Activated naive CD4-positive, alpha-beta T cell treated with anti-CD3 and anti-CD28 coated beads for 36 hours (primary cell): ENCODE measurements at regions of chr2 and their contacts with region 1.

Region 1: DNA sequence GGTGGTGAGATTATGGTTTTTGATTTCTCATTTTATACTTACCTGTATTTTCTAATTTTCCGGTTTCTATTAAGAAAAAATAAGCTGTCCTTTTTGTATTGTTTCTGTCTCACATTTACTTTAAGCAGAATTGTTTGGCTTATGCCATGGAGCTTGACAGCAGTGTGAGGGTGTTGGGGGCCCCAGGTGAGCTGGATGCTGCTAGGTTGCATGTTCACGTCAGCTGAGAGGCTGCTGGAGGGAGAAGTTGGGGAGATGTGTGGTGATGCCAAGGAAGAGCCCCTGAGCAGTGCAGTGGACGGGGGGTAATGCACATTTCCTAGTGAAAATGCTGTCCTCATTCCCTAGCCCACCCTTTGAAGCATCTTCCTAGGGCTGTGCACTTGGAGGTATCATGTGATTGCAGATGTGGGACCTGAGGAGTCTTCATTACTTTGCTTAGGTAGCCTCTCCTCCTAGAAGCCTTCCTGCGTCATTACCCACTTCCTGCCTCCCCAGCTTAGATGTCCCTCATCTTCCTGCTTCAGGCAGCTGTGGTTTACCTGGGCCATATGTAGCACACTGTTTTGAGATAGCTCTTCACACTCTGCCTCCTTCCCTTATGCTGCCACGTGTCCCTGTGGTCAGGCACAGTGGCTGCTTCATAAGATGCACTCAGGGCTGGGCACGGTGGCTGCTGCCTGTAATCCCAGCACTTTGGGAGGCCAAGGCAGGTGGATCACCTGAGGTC is 16.2 kb downstream of the ATG16L1 start:
- DNase-seq: peak; percentile 88
- H3K4me3 Mint-ChIP-seq: peak overlapping the region; percentile 64
- H3K27ac Mint-ChIP-seq: peak overlapping the region; percentile 95
- H3K4me1 Mint-ChIP-seq: peaks cover 55% of the 10 kb centered on the region
- H3K27me3 Mint-ChIP-seq: no peaks in the 10 kb centered on the region

Region 2: DNA sequence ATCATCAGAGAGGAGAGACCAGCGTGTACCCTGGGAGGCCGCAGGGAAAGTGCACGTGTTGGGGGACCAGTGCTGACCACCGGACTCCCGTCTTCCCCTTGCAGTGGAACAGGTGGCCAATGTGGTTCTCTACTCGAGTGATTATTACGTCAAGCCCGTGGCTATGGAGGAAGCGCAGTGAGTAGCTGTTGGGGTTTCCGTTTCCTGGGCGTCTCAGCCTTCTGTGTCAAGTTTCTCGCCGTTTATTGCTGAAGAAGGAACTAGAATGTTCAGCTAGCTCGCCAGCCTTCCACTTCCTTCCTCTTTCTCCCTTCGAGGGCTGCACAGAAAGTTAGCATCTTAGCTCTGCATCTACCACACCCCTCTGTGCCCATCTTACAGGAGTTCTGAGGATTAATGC is 63.9 kb after region 1 on chr2:
- CTCF ChIA-PET with region 1: no interaction called
- intact Hi-C with region 1: loop called (anchors 2 kb)
- DNase-seq: peak; percentile 78
- H3K4me3 Mint-ChIP-seq: peak overlapping the region; percentile 63
- H3K27ac Mint-ChIP-seq: peak overlapping the region; percentile 88
- H3K4me1 Mint-ChIP-seq: peaks cover 20% of the 10 kb centered on the region
- H3K27me3 Mint-ChIP-seq: no peaks in the 10 kb centered on the region

Region 3: DNA sequence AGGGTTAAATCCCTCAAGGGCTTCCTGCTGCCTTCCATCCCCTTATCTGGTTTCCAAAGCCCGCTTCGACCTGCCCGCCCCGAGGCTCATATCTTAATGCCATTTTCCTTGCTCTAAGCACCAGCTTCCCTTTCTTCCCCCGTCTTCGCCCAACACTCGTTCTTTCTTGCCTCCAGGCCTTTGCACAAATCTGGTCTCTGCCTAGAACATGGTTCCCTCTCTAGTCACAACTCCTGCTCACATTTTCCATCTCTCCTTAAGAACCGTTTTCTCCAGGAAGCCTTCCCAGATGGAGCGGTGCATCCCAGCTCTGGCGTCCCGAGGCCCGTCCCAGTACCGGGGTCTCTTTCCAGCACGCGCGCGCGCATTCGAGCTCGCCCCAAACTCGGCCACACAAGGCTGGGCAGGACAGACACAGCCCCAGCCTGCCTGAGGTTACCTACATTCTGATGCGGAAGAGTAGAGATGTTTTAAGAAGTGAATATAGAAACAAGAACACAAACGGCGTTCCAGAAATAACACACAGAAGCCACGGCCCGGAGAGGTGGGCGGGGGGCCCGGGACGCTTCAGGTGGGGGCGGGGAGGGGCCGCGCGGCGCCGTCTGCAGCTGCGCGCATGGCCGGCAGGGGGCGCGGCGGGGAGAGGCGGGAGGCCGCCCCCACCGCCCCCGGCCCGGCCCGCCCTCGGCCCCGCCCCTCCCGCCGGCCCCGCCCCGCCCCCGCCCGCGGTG is 86.3 kb after region 1 on chr2 and contains the start of gene DGKD:
- CTCF ChIA-PET with region 1: no interaction called
- intact Hi-C with region 1: loop called (anchors 1 kb)
- DNase-seq: peak; percentile 71
- H3K4me3 Mint-ChIP-seq: peak within 1 kb of the TSS; percentile 87
- H3K27ac Mint-ChIP-seq: peak within 1 kb of the TSS; percentile 70
- H3K4me1 Mint-ChIP-seq: peaks cover 63% of the 10 kb centered on the region
- H3K27me3 Mint-ChIP-seq: no peaks in the 10 kb centered on the region
- total RNA-seq, gene DGKD: 68.9 to 72.3 TPM

Region 4: GRCh38 chr2:233418761-233419625 is 151.3 kb after region 1 on chr2:
- CTCF ChIA-PET with region 1: no interaction called
- intact Hi-C with region 1: loop called (anchors 2 kb)
- DNase-seq: peak; percentile 67
- H3K4me3 Mint-ChIP-seq: peak overlapping the region; percentile 67
- H3K27ac Mint-ChIP-seq: peak overlapping the region; percentile 88
- H3K4me1 Mint-ChIP-seq: peaks cover 97% of the 10 kb centered on the region
- H3K27me3 Mint-ChIP-seq: no peaks in the 10 kb centered on the region

Region 5: DNA sequence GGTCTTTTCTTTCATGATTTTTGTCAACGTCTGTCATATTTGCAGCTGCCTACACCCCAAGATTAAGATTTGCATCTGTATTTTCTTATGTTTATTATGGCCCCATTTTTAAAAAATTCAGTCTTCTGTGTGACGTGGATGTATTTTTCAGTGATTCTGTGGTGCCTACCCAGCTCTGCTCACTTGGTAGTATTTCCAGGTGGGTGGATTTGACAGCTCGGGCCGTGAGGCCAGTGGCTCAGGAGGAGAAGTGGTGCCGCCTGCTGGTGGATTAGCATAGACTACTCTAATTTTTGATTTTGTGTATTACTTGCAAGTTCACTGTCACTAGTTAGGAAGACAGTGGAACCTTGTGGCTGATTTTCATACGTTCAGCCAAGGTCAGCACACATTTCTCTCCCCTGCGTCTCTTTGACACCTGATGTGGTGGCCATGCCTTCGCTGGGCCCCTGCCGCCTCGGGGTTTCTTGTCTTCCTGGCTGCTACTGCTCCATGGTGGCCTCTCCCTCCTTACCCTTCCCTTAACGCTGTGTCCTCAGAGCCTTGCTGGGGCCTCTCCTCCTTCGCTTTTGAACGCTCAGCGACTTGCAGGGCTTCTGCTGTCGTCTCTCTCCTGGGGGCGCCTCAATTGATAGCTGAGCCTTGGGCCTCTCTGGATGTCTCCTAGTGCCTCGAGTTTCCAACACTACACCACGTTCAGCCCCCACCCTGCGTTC is 175.9 kb after region 1 on chr2:
- CTCF ChIA-PET with region 1: interaction called, 7 read pairs
- intact Hi-C with region 1: loop called (anchors 1 kb)
- DNase-seq: peak; percentile 91
- H3K4me3 Mint-ChIP-seq: no peak overlapping the region
- H3K27ac Mint-ChIP-seq: peak overlapping the region; percentile 30
- H3K4me1 Mint-ChIP-seq: peaks cover 16% of the 10 kb centered on the region
- H3K27me3 Mint-ChIP-seq: no peaks in the 10 kb centered on the region

Region 6: GRCh38 chr2:233566141-233566960 is 298.7 kb after region 1 on chr2 and contains the start of gene USP40:
- CTCF ChIA-PET with region 1: no interaction called
- intact Hi-C with region 1: loop called (anchors 5 kb)
- DNase-seq: peak; percentile 75
- H3K4me3 Mint-ChIP-seq: peak within 1 kb of the TSS; percentile 92
- H3K27ac Mint-ChIP-seq: peak within 1 kb of the TSS; percentile 92
- H3K4me1 Mint-ChIP-seq: peaks cover 9% of the 10 kb centered on the region
- H3K27me3 Mint-ChIP-seq: no peaks in the 10 kb centered on the region
- total RNA-seq, gene USP40: 15.3 to 17.5 TPM